ENCODE measurements at regions of chr10 and their contacts with region 1.

Region 1: GRCh38 chr10:95485445-95485844 is 75.7 kb downstream of the SORBS1 start:
- DNase-seq: peak; percentile 17
- H3K4me3 Mint-ChIP-seq: no peak overlapping the region
- H3K27ac Mint-ChIP-seq: peak overlapping the region; percentile 75
- H3K4me1 Mint-ChIP-seq: peaks cover 17% of the 10 kb centered on the region
- H3K27me3 Mint-ChIP-seq: no peaks in the 10 kb centered on the region

Region 2: GRCh38 chr10:95467162-95467599 is 18.3 kb before region 1 on chr10:
- CTCF ChIA-PET with region 1: no interaction called
- POLR2A ChIA-PET with region 1: no interaction called
- intact Hi-C with region 1: no loop called
- DNase-seq: no peak
- H3K4me3 Mint-ChIP-seq: no peak overlapping the region
- H3K27ac Mint-ChIP-seq: no peak overlapping the region
- H3K4me1 Mint-ChIP-seq: no peaks in the 10 kb centered on the region
- H3K27me3 Mint-ChIP-seq: no peaks in the 10 kb centered on the region

Region 3: GRCh38 chr10:95501203-95502094 is 16.0 kb after region 1 on chr10:
- CTCF ChIA-PET with region 1: no interaction called
- POLR2A ChIA-PET with region 1: no interaction called
- intact Hi-C with region 1: loop called (anchors 2 kb)
- DNase-seq: no peak
- H3K4me3 Mint-ChIP-seq: no peak overlapping the region
- H3K27ac Mint-ChIP-seq: no peak overlapping the region
- H3K4me1 Mint-ChIP-seq: peaks cover 4% of the 10 kb centered on the region
- H3K27me3 Mint-ChIP-seq: no peaks in the 10 kb centered on the region

Region 4: GRCh38 chr10:95513941-95514392 is 28.5 kb after region 1 on chr10:
- CTCF ChIA-PET with region 1: interaction called, 4 read pairs
- POLR2A ChIA-PET with region 1: no interaction called
- intact Hi-C with region 1: loop called (anchors 1 kb)
- DNase-seq: peak; percentile 55
- H3K4me3 Mint-ChIP-seq: no peak overlapping the region
- H3K27ac Mint-ChIP-seq: no peak overlapping the region
- H3K4me1 Mint-ChIP-seq: peaks cover 13% of the 10 kb centered on the region
- H3K27me3 Mint-ChIP-seq: peaks cover 2% of the 10 kb centered on the region

Region 5: GRCh38 chr10:95561182-95562075 is 76.0 kb after region 1 on chr10 and contains the start of gene SORBS1:
- CTCF ChIA-PET with region 1: no interaction called
- POLR2A ChIA-PET with region 1: no interaction called
- intact Hi-C with region 1: loop called (anchors 2 kb)
- DNase-seq: peak; percentile 93
- H3K4me3 Mint-ChIP-seq: peak within 1 kb of the TSS; percentile 86
- H3K27ac Mint-ChIP-seq: peak within 1 kb of the TSS; percentile 9
- H3K4me1 Mint-ChIP-seq: peaks cover 4% of the 10 kb centered on the region
- H3K27me3 Mint-ChIP-seq: peaks cover 5% of the 10 kb centered on the region
- total RNA-seq, gene SORBS1: 1.5 to 1.8 TPM

Measured in activated CD4-positive, alpha-beta memory T cell treated with anti-CD3 and anti-CD28 coated beads for 36 hours (primary cell).